ENCODE measurements at regions of chr15 and their contacts with region 1.

Region 1: DNA sequence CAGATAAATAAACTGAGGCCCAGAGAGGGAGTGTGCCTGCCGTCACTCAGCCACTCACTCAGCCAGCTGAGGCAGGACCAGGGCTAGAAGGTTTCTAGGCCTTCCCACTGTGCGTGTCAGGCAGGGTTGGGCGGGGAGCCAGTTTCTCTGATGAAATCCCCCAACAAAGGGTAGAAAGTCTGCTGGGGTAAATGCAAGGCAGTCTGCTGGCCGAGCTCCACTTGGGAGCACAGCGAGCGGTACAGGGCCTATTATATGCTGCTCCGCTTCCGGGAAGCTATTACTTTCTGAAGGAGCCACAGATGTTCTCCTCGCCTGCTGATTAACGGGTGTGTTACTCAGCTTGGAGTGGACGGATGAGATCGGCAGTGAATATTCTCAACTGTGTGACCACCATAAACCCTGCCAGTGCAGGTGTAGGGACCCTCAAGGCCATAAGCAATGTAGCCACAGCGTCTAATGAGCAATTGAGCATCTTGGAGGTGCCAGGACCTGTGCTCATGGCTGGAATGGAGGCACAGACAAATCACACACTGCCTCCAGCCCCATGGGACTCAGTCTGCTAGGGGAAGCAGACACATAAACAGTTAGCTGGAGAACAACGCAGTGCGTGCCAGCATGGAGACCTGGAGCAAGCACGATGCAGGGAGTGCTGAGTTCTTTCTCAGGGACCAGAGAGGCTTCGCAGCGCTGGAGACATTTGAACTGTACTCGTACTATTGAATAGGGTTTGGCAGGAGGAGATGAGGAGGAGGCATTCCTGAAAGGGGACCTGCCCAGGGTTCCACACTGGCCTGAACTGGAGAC is 42.1 kb downstream of the CORO2B start:
- DNase-seq: peak; percentile 79 to 86
- ATAC-seq: peak; percentile 72 to 85
- H3K4me3 ChIP-seq: no peak overlapping the region
- H3K27ac ChIP-seq: peak overlapping the region; percentile 46 to 64 (median 60)
- H3K4me1 ChIP-seq: peaks cover 11% of the 10 kb centered on the region in 2 donors
- H3K27me3 ChIP-seq: no peaks in the 10 kb centered on the region
- CTCF ChIP-seq: no peak
- POLR2A ChIP-seq: peak in 1 of 2 donors; percentile 21

Region 2: GRCh38 chr15:68578174-68578979 is 42.5 kb before region 1 on chr15:
- in situ Hi-C with region 1: no loop called
- intact Hi-C with region 1: loop called (anchors 5 kb)
- DNase-seq: peak; percentile 33 to 52
- ATAC-seq: peak; percentile 63 to 68
- H3K4me3 ChIP-seq: peak overlapping the region; percentile 51 to 64 (median 59)
- H3K27ac ChIP-seq: peak overlapping the region; percentile 26 to 76 (median 60)
- H3K4me1 ChIP-seq: peaks cover 0 to 4% of the 10 kb centered on the region in 2 donors
- H3K27me3 ChIP-seq: peaks cover 10 to 27% (median 11%) of the 10 kb centered on the region in 3 donors
- CTCF ChIP-seq: peak; percentile 31 to 64 (median 53)
- POLR2A ChIP-seq: no peak

Measured in gastrocnemius medialis (tissue), 4 donors.